ENCODE measurements at regions of chr6 and their contacts with region 1.

Region 1: GRCh38 chr6:391559-392440 is at the start of gene IRF4:
- DNase-seq: peak; percentile 92
- CTCF ChIP-seq: no peak

Region 2: DNA sequence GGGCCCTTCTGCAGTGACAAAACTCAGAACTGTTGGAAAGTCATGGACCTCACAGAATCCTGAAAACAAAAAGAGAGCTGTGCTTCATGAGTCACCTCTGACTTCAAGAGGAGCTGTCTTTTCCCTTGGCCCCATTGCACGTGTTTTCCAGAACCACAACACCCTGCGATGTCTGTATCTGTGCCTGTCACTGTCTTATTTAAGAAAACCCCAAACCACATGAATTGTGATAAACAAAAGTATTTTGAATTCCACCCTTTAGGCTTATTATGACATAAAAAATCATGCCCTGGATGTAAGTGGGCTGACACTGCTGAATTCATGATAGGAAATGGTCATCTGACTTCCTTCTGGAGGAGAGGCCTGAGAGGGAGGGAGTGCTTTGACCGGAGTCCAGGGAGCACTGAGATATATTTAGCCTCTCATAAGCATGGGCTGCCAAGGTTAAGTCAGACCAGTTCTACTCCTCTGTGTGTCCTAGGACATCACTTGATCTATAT is 195.9 kb before region 1 on chr6:
- CTCF ChIA-PET with region 1: interaction called, 39 read pairs
- POLR2A ChIA-PET with region 1: interaction called, 30 read pairs
- DNase-seq: no peak
- CTCF ChIP-seq: no peak

Region 3: DNA sequence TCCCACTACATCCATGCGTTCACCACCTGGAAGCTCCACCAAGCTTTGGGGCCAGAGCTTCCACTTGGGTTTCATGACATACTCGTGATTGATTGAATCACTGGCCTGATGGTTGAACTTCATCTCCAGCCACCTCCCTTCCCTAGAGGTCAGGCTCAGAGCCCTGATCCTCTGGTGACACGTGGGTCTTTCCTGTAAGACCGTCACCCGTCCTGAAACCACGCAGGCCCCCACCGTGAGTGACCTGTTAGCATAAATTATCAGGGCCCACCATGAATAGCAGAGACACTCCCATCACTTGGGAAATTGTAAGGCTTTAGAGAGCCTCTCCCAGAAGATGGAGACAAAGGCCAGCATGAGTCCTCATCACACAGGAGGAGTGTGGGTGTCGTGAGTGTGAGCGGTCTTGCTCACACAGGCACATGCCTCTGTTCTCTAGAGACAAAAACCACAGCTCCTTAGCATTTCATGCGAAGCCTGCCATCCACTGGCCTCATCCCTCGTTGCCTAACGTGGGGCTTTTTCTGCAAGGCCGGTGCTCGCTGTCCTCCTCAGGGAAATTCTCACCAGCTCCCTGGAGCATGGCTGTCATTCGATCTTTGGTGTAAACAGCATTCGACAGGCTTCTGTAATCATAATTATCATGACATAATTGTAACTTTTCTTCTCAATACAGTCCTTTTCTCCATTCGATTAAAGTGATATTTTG is 164.6 kb before region 1 on chr6:
- CTCF ChIA-PET with region 1: interaction called, 7 read pairs
- POLR2A ChIA-PET with region 1: interaction called, 36 read pairs
- DNase-seq: peak; percentile 65
- CTCF ChIP-seq: peak; percentile 42

Region 4: DNA sequence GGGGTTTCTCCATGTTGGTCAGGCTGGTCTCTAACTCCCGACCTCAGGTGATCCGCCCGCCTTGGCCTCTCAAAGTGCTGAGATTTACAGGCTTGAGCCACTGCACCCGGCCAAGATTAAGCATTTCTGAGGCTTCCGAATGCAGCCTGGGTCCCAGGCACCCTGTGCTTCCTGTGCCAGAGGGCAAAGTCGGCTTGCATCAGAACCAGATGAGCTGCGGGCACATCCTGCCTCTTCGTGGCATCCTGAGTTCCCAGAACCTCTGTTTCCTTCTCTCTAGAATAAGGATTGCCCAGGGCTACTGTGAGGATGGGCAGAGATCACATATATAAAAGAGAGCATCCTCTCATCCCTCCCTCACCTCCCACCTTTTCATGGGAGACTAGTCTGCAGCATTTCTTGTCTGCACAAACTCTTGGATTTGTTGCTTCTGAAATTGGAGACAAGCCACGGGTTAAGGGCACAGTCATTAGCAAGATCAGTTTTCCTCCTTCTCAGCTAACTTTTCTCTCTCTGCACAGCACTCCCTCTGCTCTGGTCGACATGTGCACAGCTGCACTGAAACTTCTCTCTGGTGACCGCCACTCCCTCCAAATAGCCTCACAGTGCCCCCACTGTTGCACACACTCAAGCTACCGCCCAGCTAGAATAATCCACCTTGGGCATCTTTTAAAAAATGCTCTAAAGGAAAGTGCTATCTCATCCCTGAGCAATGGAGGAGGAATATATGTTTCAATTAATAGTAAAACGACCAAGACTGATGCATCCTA is 150.5 kb before region 1 on chr6:
- CTCF ChIA-PET with region 1: no interaction called
- POLR2A ChIA-PET with region 1: no interaction called
- DNase-seq: no peak
- CTCF ChIP-seq: no peak

Region 5: GRCh38 chr6:268394-268935 is 123.3 kb before region 1 on chr6:
- CTCF ChIA-PET with region 1: no interaction called
- POLR2A ChIA-PET with region 1: no interaction called
- DNase-seq: no peak
- CTCF ChIP-seq: no peak

Region 6: DNA sequence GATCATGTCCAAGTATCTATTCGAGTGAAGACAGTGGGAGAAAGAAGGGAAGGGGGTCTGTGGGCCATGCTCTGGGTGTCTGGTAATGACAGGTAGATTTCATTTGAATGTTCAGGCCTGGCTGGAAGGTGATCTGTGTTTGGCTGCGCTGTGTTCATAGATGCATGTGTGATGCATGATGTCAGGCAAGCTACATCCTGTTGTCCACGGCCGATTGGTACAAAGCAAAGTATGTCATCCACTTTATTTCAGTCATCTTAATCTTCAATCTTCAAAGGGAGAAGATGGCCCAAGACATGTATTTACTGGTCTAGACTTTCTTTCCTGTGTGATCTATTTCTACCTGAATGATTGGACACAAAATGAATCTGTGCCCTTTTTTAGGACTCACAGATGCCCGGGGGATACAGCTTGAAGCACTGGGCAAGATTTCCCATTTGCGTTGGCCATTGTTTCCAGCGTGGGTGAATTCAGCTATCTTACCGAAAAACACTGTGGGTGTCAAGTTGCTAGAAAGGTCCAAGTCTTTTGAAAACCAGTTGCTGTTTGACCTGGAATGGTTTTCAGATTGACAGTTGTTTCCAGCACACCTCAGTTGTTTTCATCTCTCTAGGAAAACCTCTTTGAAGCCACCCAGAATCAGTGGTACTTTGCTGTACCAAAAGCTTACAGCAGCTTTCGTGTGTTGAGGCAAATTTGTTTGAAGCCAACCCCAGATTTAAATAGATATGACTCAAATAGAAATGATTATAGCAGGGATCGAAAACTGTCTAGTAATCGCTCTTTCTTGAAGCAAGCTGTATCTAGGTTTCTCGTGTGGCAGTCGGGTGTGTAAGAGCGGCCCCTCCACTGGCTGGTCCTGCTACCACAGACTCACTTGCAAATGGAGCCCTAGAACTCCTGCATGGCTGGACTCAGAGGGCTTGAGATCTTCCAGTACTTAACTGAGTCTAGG is 72.3 kb before region 1 on chr6:
- CTCF ChIA-PET with region 1: interaction called, 3 read pairs
- POLR2A ChIA-PET with region 1: interaction called, 20 read pairs
- DNase-seq: peak; percentile 82
- CTCF ChIP-seq: no peak

Region 7: GRCh38 chr6:336159-337019 is 55.4 kb before region 1 on chr6:
- CTCF ChIA-PET with region 1: no interaction called
- POLR2A ChIA-PET with region 1: interaction called, 34 read pairs
- DNase-seq: peak; percentile 70
- CTCF ChIP-seq: no peak

Region 8: GRCh38 chr6:373751-374724 is 17.8 kb before region 1 on chr6:
- CTCF ChIA-PET with region 1: interaction called, 4 read pairs
- POLR2A ChIA-PET with region 1: interaction called, 11 read pairs
- DNase-seq: no peak
- CTCF ChIP-seq: no peak

Region 9: DNA sequence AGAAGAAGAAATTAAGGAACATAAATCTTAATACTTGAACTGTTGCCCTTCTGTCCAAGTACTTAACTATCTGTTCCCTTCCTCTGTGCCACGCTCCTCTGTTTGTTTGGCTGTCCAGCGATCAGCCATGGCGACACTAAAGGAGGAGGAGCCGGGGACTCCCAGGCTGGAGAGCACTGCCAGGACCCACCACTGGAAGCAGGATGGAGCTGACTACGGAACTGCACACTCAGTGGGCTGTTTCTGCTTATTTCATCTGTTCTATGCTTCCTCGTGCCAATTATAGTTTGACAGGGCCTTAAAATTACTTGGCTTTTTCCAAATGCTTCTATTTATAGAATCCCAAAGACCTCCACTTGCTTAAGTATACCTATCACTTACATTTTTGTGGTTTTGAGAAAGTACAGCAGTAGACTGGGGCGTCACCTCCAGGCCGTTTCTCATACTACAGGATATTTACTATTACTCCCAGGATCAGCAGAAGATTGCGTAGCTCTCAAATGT is 16.9 kb after region 1 on chr6:
- CTCF ChIA-PET with region 1: interaction called, 41 read pairs
- POLR2A ChIA-PET with region 1: interaction called, 93 read pairs
- DNase-seq: no peak
- CTCF ChIP-seq: no peak